Stomach (tissue), 19 donors: ENCODE measurements at regions of chr1 and their contacts with region 1.

Region 1: DNA sequence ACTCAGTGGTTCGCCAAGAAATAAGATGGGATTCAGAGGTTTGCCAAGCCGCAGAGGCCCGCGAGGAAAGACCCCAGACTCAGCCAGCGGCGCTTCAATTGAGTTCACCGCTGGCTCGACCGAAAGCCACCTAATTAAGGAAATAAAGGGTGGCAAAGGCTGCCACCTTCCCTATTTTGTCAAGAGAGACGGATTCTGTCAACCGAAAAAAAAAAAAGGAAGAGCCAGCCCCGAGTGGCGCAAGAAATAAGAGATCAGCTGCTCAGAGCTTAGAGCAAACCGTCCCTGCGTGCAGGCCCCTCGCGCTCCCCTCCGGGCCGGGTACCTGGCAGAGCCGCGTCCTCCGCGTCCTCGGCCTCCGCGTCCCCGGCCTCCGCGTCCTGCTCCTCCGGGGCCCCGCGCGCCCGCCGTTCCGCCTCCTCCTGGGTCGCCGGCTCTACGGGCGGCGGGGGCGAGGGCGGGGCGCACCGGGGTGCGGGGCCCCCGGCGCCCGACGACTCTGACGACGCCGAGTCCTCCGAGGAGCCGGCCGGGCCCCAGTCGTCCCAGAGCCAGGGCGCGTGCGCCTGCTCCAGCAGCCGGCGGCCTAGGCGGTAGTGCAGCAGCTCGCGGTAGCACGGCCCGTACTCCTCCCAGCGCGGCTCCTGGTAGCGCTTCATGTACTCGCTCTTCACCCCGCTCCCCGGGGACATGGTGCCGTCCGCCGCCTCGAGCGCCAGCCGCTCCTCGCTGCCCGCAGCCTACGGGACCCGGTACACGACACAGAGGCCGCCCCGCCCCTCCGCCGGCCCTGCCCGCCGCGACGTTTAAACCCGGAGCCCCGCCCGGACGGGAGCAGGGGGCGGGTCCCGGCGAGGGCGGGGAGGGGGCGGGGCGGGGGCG is 832 bp downstream of the CCSAP start:
- DNase-seq: peak; percentile 89 to 94
- H3K4me3 ChIP-seq: peak overlapping the region; percentile 82 to 98 (median 96)
- H3K27ac ChIP-seq: peak overlapping the region; percentile 85 to 95 (median 94)
- H3K4me1 ChIP-seq: peaks cover 7 to 51% (median 30%) of the 10 kb centered on the region in 4 donors
- H3K27me3 ChIP-seq: peaks cover 0 to 27% (median 0%) of the 10 kb centered on the region in 3 donors
- CTCF ChIP-seq: no peak
- EP300 ChIP-seq: no peak
- POLR2A ChIP-seq: no peak

Region 2: DNA sequence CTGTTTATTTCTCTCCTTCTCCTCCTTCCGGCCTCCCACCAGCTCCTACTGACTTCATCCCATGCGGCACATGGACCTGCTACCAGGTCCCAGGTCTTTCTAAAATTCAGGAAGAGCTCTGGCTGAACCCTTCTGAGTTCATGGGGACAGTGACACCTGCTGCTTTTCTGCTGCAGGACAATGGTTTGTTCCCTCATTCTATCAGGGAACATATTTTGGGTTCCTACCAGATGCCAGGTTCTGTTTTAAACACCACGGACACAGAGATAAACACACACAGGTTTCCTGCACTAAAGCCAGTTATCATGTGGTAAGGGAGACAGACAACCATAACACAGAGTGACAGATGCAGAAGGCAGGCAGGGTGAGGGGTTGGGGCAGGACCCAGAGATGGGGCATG is 185.1 kb before region 1 on chr1:
- intact Hi-C with region 1: no loop called
- DNase-seq: peak in 1 of 2 donors; percentile 69
- H3K4me3 ChIP-seq: no peak overlapping the region
- H3K27ac ChIP-seq: peak overlapping the region in 1 of 5 donors; percentile 2
- H3K4me1 ChIP-seq: peaks cover 0 to 25% (median 7%) of the 10 kb centered on the region in 4 donors
- H3K27me3 ChIP-seq: no peaks in the 10 kb centered on the region
- CTCF ChIP-seq: peak in 5 of 7 experiments; percentile 16 to 55 (median 40)
- EP300 ChIP-seq: no peak
- POLR2A ChIP-seq: no peak

Region 3: DNA sequence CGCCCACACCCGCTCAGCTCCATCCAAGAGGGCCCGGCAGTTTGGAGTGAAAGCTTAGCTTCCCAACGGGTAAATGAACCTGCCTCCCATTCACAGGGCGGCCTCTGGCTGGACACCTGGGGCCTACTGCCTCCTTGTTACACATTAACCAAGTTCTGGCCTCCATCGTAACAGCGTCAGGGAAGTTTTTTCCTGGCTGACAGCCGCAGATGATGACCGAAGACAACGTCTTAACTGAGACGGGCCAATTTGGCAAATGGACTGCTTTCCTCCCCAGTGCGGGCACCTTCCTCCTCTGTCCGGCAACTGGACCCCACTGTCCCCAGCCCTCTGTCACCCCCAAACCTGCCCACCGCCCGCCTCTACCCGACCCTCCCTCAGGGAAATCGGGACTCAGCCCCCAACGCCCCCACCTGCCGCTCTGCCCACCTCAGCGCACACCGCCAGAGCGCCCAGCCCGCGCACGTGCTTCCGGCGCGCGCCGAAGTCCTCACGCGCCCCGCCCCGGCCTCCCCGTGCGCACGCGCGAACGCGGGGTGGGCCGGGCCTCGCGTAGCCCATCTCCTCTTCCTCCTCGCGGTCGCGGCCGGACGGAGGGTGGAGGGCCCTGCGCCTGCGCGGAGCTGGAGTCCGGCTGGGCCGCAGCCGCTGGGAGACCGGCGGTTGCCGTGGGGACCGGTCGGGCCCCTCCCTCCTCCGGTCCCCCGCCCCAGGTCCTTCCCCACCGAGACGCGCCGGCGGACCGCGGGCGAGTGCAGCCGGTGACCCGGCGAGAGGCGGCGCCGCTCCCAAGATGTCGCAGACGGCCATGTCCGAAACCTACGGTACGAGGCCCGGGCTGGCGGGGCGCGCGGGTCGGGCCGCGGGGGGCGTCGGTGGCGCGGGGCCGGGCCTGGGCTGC is 71.2 kb before region 1 on chr1 and contains the start of gene RAB4A:
- intact Hi-C with region 1: loop called (anchors 10 kb)
- DNase-seq: peak; percentile 91 to 97
- H3K4me3 ChIP-seq: peak within 1 kb of the TSS; percentile 70 to 87 (median 80)
- H3K27ac ChIP-seq: peak within 1 kb of the TSS; percentile 88 to 95 (median 93)
- H3K4me1 ChIP-seq: peaks cover 41 to 59% (median 47%) of the 10 kb centered on the region in 4 donors
- H3K27me3 ChIP-seq: no peaks in the 10 kb centered on the region
- CTCF ChIP-seq: no peak
- EP300 ChIP-seq: no peak
- POLR2A ChIP-seq: peak in 1 of 4 donors; percentile 15
- total RNA-seq, gene RAB4A: 24.1 to 277 (median 41.4) TPM